Ovary (tissue), 10 donors: ENCODE measurements at regions of chr1 and their contacts with region 1.

Region 1: GRCh38 chr1:183023601-183024316 is 539 bp downstream of the LAMC1 start:
- DNase-seq: peak; percentile 55 to 69 (median 63)
- H3K4me3 ChIP-seq: peak overlapping the region; percentile 62
- H3K27ac ChIP-seq: peak overlapping the region; percentile 92 to 100
- H3K4me1 ChIP-seq: peaks cover 5% of the 10 kb centered on the region
- H3K27me3 ChIP-seq: no peaks in the 10 kb centered on the region
- CTCF ChIP-seq: peak in 1 of 3 donors; percentile 25
- EP300 ChIP-seq: no peak
- POLR2A ChIP-seq: peak; percentile 14

Region 2: DNA sequence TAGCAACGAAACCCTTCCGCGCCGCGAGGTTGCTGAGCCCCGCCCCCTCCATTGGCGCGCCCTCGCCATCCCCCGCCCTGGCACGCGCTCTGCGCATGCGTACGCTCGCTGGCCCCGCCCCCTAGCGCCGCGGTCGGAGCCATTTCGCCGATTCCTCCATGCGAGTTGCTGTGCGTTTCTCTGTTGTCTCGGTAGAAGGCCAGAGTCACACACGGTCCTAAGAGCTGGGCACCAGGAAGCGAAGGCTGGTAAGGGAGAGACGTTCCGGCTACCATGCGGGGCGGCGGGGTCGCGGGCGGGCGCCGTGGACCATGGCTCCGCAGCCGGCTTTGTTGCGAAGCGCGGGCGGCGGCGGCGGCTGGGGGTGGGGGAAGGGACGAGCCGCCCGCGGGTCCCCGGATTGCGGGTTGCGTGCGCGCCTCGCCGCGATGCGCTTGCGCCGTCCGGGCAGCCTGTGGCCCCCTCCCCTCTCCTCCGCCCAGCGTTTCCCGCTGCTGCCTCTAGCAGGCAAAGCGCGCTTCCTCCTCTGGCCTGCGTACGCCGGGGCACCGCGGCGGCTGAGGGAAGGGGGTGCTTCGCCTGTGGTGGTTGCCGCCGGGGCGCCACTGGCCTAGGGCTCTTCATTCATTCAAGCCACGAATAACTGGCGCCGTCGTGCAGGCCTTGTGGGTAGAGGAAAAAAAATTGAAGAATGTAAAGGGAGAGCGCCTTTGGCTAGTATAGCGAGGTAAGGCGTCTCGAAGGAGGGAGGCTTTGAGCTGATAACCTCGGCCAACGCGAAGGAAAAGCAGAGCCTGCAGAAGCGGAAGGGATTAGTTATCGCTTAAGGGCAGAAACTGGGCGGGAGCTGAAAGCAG is 184.3 kb before region 1 on chr1 and contains the start of gene DHX9:
- intact Hi-C with region 1: no loop called
- DNase-seq: peak; percentile 92 to 97 (median 97)
- H3K4me3 ChIP-seq: peak within 1 kb of the TSS; percentile 76
- H3K27ac ChIP-seq: peak within 1 kb of the TSS; percentile 84 to 93
- H3K4me1 ChIP-seq: peaks cover 5% of the 10 kb centered on the region
- H3K27me3 ChIP-seq: no peaks in the 10 kb centered on the region
- CTCF ChIP-seq: peak; percentile 11 to 50 (median 31)
- EP300 ChIP-seq: no peak
- POLR2A ChIP-seq: peak; percentile 97
- total RNA-seq, gene DHX9: 70.6 to 168 (median 140) TPM

Region 3: DNA sequence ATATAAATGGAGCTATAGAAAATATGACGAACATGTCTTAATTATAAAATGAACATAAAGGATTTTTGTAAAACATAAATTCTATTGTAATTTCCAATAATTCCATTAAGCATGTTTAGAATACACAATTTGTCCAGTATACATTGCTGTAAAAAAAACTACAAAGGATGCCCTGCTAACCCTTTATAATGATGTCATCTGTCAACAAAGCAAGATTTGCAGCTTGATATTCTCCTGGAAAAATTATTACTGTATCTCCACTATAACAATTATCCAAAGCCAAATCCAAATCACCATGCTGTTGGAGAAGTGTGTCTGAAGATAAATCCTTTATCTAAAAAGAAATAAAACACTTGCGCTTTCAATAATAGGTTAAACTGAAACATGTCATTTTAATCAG is 118.4 kb before region 1 on chr1:
- intact Hi-C with region 1: no loop called
- DNase-seq: no peak
- H3K4me3 ChIP-seq: no peak overlapping the region
- H3K27ac ChIP-seq: no peak overlapping the region
- H3K4me1 ChIP-seq: no peaks in the 10 kb centered on the region
- H3K27me3 ChIP-seq: no peaks in the 10 kb centered on the region
- CTCF ChIP-seq: no peak
- EP300 ChIP-seq: no peak
- POLR2A ChIP-seq: no peak

Region 4: DNA sequence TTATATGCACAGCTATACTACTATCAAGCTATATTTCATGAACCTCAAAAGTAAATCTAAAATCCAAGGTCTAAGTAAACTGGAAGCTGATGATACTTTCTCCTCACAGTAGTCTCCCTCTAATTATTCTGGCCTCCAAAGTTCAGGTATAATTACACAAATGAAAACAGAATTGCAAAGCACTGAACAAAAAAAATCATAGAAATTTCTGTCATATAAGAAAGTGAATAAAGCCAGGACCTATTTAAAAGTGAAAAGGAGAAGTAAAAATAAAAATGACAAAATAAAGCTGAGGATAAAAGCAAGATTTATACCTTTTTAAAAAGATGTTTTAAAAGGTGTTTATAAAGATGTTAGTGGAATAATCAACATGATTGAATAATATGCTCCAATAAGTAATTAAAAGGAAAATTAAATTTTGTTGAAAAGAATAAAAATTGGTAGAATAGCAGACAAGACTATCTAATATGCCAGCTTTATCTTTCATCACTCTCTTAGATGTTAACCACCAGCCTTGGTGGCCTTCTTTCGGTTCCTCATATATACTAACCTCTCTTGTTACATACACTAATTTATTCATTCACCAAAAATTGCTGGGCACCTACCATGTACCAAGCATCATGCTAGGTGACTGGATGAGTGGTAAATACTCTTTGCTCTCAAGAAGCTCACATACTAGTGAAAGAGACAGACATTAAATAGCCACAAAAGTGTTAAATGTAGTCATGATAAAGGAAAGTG is 95.9 kb before region 1 on chr1:
- intact Hi-C with region 1: no loop called
- DNase-seq: no peak
- H3K4me3 ChIP-seq: no peak overlapping the region
- H3K27ac ChIP-seq: no peak overlapping the region
- H3K4me1 ChIP-seq: no peaks in the 10 kb centered on the region
- H3K27me3 ChIP-seq: no peaks in the 10 kb centered on the region
- CTCF ChIP-seq: no peak
- EP300 ChIP-seq: no peak
- POLR2A ChIP-seq: no peak

Region 5: DNA sequence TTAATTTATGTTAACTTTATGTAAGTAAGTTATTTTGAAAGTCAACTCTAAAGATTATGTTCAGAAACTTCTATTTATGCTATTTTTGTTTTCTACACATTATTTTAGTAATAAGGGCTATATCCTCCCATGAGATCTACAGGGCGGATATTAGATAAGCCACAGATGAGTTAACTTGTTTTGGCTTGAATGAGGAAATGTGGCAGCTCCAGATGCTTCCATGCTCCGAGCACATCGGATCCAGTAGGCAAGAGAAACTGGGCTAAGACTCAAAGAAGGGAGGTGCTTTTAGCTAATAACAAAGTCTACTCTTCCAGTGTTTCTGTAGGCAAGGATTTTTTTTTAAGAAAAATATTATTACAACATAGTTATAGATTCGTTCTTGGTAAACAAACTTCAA is 20.6 kb before region 1 on chr1:
- intact Hi-C with region 1: no loop called
- DNase-seq: no peak
- H3K4me3 ChIP-seq: no peak overlapping the region
- H3K27ac ChIP-seq: no peak overlapping the region
- H3K4me1 ChIP-seq: no peaks in the 10 kb centered on the region
- H3K27me3 ChIP-seq: no peaks in the 10 kb centered on the region
- CTCF ChIP-seq: no peak
- EP300 ChIP-seq: no peak
- POLR2A ChIP-seq: no peak

Region 6: GRCh38 chr1:183070923-183071618 is 47.3 kb after region 1 on chr1:
- intact Hi-C with region 1: loop called in 1 of 4 experiments (anchors 10 kb)
- DNase-seq: no peak
- H3K4me3 ChIP-seq: no peak overlapping the region
- H3K27ac ChIP-seq: no peak overlapping the region
- H3K4me1 ChIP-seq: peaks cover 9% of the 10 kb centered on the region
- H3K27me3 ChIP-seq: no peaks in the 10 kb centered on the region
- CTCF ChIP-seq: no peak
- EP300 ChIP-seq: no peak
- POLR2A ChIP-seq: no peak

Region 7: DNA sequence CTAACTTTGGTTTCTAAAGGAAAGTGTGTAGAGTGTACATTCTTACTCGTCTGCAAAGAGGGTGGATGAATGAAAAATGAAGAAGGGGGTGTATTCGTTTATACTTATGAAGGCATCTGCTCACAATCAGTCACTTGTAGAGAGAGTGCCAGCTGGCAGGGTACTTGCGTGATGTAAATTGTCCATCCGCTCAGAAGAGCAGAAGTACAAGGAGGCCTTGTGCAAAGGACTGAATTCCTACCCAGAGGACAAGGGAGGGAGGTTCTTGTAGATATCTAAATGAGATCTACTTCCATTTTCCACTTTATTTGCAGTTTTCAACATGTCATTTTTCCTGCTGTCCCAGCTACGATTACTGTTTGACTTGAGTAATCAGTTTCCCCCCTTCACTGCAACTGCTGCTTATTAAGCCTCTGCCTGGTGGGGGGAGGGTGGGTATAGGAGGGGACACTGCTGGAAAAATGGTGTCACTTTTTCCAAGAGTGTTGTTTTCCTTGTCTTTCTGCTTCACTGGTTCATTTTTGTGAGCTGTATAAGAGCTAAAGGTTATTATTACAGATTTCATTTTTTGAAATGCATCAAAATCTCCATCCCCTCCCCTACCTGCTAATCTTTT is 66.7 kb after region 1 on chr1:
- intact Hi-C with region 1: loop called in 2 of 4 experiments (anchors 10 kb)
- DNase-seq: peak in 3 of 5 donors; percentile 27 to 50 (median 37)
- H3K4me3 ChIP-seq: no peak overlapping the region
- H3K27ac ChIP-seq: no peak overlapping the region
- H3K4me1 ChIP-seq: peaks cover 19% of the 10 kb centered on the region
- H3K27me3 ChIP-seq: no peaks in the 10 kb centered on the region
- CTCF ChIP-seq: no peak
- EP300 ChIP-seq: no peak
- POLR2A ChIP-seq: no peak

Region 8: GRCh38 chr1:183234660-183235476 is 211.1 kb after region 1 on chr1:
- intact Hi-C with region 1: loop called in 2 of 4 experiments (anchors 2 to 5 kb)
- DNase-seq: peak; percentile 71 to 85 (median 73)
- H3K4me3 ChIP-seq: peak overlapping the region; percentile 36
- H3K27ac ChIP-seq: peak overlapping the region; percentile 63 to 81
- H3K4me1 ChIP-seq: peaks cover 7% of the 10 kb centered on the region
- H3K27me3 ChIP-seq: no peaks in the 10 kb centered on the region
- CTCF ChIP-seq: peak; percentile 60 to 75 (median 68)
- EP300 ChIP-seq: no peak
- POLR2A ChIP-seq: peak; percentile 30

Region 9: DNA sequence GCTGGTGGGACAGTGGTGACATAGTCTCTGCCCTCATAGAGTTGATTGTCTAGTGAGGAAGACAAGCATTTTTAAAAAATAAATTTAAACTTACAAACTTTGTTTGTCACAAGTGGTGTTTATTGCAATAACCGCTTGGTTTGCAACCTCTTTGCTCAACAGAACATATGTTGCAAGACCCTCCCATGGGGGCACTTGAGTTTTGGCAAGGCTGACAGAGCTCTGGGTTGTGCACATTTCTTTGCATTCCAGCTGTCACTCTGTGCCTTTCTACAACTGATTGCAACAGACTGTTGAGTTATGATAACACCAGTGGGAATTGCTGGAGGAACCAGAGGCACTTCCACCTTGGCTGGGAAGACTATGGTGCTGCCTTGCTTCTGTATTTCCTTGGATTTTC is 220.7 kb after region 1 on chr1:
- intact Hi-C with region 1: loop called in 1 of 4 experiments (anchors 5 kb)
- DNase-seq: peak in 4 of 5 donors; percentile 25 to 87 (median 48)
- H3K4me3 ChIP-seq: no peak overlapping the region
- H3K27ac ChIP-seq: peak overlapping the region in 1 of 2 donors; percentile 84
- H3K4me1 ChIP-seq: peaks cover 7% of the 10 kb centered on the region
- H3K27me3 ChIP-seq: no peaks in the 10 kb centered on the region
- CTCF ChIP-seq: no peak
- EP300 ChIP-seq: peak; percentile 76
- POLR2A ChIP-seq: no peak

Region 10: GRCh38 chr1:183635606-183636333 is 612.0 kb after region 1 on chr1 and contains the start of gene ARPC5:
- intact Hi-C with region 1: loop called in 1 of 4 experiments (anchors 5 kb)
- DNase-seq: peak; percentile 96 to 99 (median 97)
- H3K4me3 ChIP-seq: peak within 1 kb of the TSS; percentile 93
- H3K27ac ChIP-seq: peak within 1 kb of the TSS; percentile 70 to 72
- H3K4me1 ChIP-seq: peaks cover 4% of the 10 kb centered on the region
- H3K27me3 ChIP-seq: no peaks in the 10 kb centered on the region
- CTCF ChIP-seq: no peak
- EP300 ChIP-seq: no peak
- POLR2A ChIP-seq: peak; percentile 72
- total RNA-seq, gene ARPC5: 41.8 to 84.6 (median 61.4) TPM